Activated CD4-positive, alpha-beta T cell treated with anti-CD3 and anti-CD28 coated beads for 36 hours (primary cell): ENCODE measurements at regions of chr17 and their contacts with region 1.

Region 1: GRCh38 chr17:49556223-49556971 is 19.3 kb upstream of the NXPH3 start:
- DNase-seq: peak; percentile 92
- ATAC-seq: peak; percentile 96
- H3K4me3 Mint-ChIP-seq: no peak overlapping the region
- H3K27ac Mint-ChIP-seq: no peak overlapping the region
- H3K4me1 Mint-ChIP-seq: peaks cover 8% of the 10 kb centered on the region
- H3K27me3 Mint-ChIP-seq: peaks cover 3% of the 10 kb centered on the region

Region 2: GRCh38 chr17:49407981-49408501 is 148.4 kb before region 1 on chr17:
- CTCF ChIA-PET with region 1: interaction called, 134 read pairs
- POLR2A ChIA-PET with region 1: interaction called, 5 read pairs
- intact Hi-C with region 1: loop called (anchors 1 kb)
- DNase-seq: peak; percentile 91
- ATAC-seq: peak; percentile 100
- H3K4me3 Mint-ChIP-seq: no peak overlapping the region
- H3K27ac Mint-ChIP-seq: no peak overlapping the region
- H3K4me1 Mint-ChIP-seq: peaks cover 34% of the 10 kb centered on the region
- H3K27me3 Mint-ChIP-seq: no peaks in the 10 kb centered on the region

Region 3: GRCh38 chr17:49425004-49425286 is 131.5 kb before region 1 on chr17:
- CTCF ChIA-PET with region 1: interaction called, 17 read pairs
- POLR2A ChIA-PET with region 1: no interaction called
- intact Hi-C with region 1: no loop called
- DNase-seq: no peak
- ATAC-seq: no peak
- H3K4me3 Mint-ChIP-seq: no peak overlapping the region
- H3K27ac Mint-ChIP-seq: no peak overlapping the region
- H3K4me1 Mint-ChIP-seq: no peaks in the 10 kb centered on the region
- H3K27me3 Mint-ChIP-seq: peaks cover 10% of the 10 kb centered on the region

Region 4: DNA sequence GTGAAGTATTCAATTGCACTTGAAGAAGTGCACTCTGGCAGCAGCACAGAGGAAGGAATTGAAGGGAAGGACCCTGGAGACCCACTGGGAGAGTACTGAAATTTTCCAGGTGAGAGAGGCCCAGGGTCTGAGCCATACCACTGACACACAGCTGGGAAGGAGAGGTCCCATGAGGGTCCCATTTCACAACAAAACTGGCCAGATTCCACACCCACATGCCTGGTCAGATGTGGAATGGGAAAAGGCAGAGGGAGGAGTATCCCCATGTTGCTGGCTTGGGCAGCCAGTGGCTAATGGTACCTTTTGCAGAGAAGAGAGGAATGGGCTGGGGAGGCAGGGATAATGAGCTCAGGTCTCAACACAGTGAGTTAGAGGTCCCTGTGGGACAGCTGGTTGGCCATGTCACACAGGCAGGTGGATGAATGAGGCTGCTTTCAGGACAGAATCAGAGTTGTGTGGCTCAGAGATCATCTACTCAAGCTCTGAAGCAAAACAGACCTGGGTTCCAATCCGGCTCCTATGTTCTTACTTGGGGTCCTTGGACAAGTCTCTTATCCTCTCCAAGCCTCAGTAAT is 87.5 kb before region 1 on chr17:
- CTCF ChIA-PET with region 1: interaction called, 11 read pairs
- POLR2A ChIA-PET with region 1: no interaction called
- intact Hi-C with region 1: no loop called
- DNase-seq: no peak
- ATAC-seq: no peak
- H3K4me3 Mint-ChIP-seq: no peak overlapping the region
- H3K27ac Mint-ChIP-seq: no peak overlapping the region
- H3K4me1 Mint-ChIP-seq: no peaks in the 10 kb centered on the region
- H3K27me3 Mint-ChIP-seq: peaks cover 44% of the 10 kb centered on the region

Region 5: GRCh38 chr17:49527927-49528651 is 28.3 kb before region 1 on chr17:
- CTCF ChIA-PET with region 1: interaction called, 16 read pairs
- POLR2A ChIA-PET with region 1: no interaction called
- intact Hi-C with region 1: no loop called
- DNase-seq: no peak
- ATAC-seq: no peak
- H3K4me3 Mint-ChIP-seq: no peak overlapping the region
- H3K27ac Mint-ChIP-seq: no peak overlapping the region
- H3K4me1 Mint-ChIP-seq: peaks cover 8% of the 10 kb centered on the region
- H3K27me3 Mint-ChIP-seq: peaks cover 10% of the 10 kb centered on the region

Region 6: GRCh38 chr17:49567871-49568694 is 11.7 kb after region 1 on chr17:
- CTCF ChIA-PET with region 1: interaction called, 50 read pairs
- POLR2A ChIA-PET with region 1: no interaction called
- intact Hi-C with region 1: no loop called
- DNase-seq: peak; percentile 91
- ATAC-seq: peak; percentile 49
- H3K4me3 Mint-ChIP-seq: peak overlapping the region; percentile 56
- H3K27ac Mint-ChIP-seq: no peak overlapping the region
- H3K4me1 Mint-ChIP-seq: peaks cover 14% of the 10 kb centered on the region
- H3K27me3 Mint-ChIP-seq: peaks cover 19% of the 10 kb centered on the region

Region 7: DNA sequence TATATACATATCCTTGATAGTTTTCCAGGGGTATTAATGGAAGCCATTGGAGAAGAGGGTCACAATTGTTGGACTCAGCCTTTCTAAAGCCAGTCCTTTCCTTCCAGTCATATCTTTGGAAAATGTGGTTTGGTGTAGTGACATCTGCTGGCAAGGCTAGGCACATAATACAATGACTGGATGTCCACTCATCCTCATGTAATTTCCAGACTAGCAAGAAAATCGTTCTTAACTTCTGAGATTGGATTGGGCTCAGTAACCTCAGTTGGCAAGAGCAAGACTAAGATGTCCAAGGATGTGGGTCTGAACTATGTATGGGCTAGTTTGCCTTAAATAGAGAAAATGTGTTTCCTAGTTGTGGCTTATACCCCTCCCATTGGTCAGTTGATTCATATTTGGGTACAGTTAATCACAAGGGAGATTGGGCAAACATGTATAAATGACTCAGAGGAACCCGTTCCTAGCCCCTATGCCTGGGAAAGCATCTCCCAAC is 223.4 kb after region 1 on chr17:
- CTCF ChIA-PET with region 1: interaction called, 10 read pairs
- POLR2A ChIA-PET with region 1: no interaction called
- intact Hi-C with region 1: no loop called
- DNase-seq: peak; percentile 35
- ATAC-seq: peak; percentile 71
- H3K4me3 Mint-ChIP-seq: no peak overlapping the region
- H3K27ac Mint-ChIP-seq: no peak overlapping the region
- H3K4me1 Mint-ChIP-seq: peaks cover 8% of the 10 kb centered on the region
- H3K27me3 Mint-ChIP-seq: no peaks in the 10 kb centered on the region